CD8-positive, alpha-beta T cell (primary cell): ENCODE measurements at regions of chr2 and their contacts with region 1.

Region 1: DNA sequence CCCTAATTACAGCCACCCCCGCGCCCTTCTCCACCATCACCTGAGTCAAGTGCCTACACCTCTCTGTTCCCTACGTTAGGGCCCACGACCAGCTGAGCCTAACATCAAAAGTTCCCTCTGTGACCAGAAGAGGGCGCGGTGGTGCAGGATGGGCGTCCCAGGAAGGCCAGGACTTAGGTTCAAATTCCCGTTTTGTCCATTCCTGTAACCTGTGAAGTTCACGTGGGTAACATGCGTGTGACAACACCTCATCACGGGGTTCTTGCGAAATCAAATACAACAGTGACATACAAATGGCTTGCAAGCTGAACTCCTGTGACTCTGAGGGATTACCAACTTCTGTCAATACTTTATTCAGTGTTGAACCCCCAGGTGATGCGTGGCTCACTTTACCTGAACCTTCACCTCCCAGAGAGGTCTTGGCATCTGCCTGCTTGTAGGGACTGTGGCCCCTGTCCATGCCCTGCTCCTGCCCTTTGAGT is 207.9 kb downstream of the ARL4C start:
- DNase-seq: peak; percentile 52 to 87 (median 73)
- ATAC-seq: no peak
- H3K4me3 ChIP-seq: no peak overlapping the region
- H3K4me3 Mint-ChIP-seq: peak overlapping the region; percentile 9
- H3K27ac ChIP-seq: peak overlapping the region; percentile 94 to 99
- H3K27ac Mint-ChIP-seq: peak overlapping the region; percentile 98
- H3K4me1 ChIP-seq: peaks cover 56% of the 10 kb centered on the region
- H3K4me1 Mint-ChIP-seq: peaks cover 66% of the 10 kb centered on the region
- H3K27me3 ChIP-seq: no peaks in the 10 kb centered on the region
- H3K27me3 Mint-ChIP-seq: no peaks in the 10 kb centered on the region
- CTCF ChIP-seq: peak; percentile 77

Region 2: DNA sequence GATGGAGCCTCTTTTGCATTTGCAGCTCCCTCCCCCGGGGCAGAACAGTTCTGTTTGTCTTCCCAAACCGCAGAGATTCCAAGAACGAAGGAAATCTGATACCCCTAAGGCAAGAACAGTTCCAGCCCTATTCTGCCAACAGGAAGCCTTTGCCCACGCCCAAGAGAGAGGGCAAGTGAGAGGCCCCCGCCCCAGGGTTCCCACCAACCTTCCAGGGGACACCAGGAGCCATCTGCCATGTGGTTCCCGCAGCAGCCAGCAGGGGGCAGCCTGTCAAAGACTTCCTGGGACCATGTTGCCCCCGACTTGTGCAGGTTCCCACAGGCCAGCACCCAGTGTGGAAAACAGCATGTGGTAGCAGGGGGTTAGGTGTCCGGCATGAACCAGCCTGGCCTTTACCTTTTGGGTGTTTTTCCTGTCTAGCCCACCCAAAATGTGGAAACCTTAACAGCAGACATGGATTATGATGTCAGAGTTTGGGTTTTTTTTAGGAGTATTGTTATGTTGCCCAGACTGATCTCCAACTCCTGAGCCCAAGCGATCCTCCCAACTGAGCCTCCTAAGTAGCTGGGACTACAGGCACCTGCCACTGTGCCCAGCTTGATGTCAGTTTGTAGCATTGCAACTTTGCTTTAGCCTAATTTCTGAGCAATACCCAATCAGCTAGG is 1677.3 kb before region 1 on chr2:
- CTCF ChIA-PET with region 1: no interaction called
- POLR2A ChIA-PET with region 1: no interaction called
- intact Hi-C with region 1: loop called in 1 of 2 experiments (anchors 5 kb)
- DNase-seq: peak; percentile 34 to 79 (median 72)
- ATAC-seq: peak; percentile 89
- H3K4me3 ChIP-seq: no peak overlapping the region
- H3K4me3 Mint-ChIP-seq: no peak overlapping the region
- H3K27ac ChIP-seq: no peak overlapping the region
- H3K27ac Mint-ChIP-seq: no peak overlapping the region
- H3K4me1 ChIP-seq: no peaks in the 10 kb centered on the region
- H3K4me1 Mint-ChIP-seq: no peaks in the 10 kb centered on the region
- H3K27me3 ChIP-seq: no peaks in the 10 kb centered on the region
- H3K27me3 Mint-ChIP-seq: peaks cover 3% of the 10 kb centered on the region
- CTCF ChIP-seq: peak; percentile 79

Region 3: GRCh38 chr2:233603520-233603919 is 685.5 kb before region 1 on chr2:
- CTCF ChIA-PET with region 1: no interaction called
- POLR2A ChIA-PET with region 1: no interaction called
- intact Hi-C with region 1: no loop called
- DNase-seq: no peak
- ATAC-seq: no peak
- H3K4me3 ChIP-seq: no peak overlapping the region
- H3K4me3 Mint-ChIP-seq: no peak overlapping the region
- H3K27ac ChIP-seq: no peak overlapping the region
- H3K27ac Mint-ChIP-seq: no peak overlapping the region
- H3K4me1 ChIP-seq: no peaks in the 10 kb centered on the region
- H3K4me1 Mint-ChIP-seq: no peaks in the 10 kb centered on the region
- H3K27me3 ChIP-seq: peaks cover 0 to 2% of the 10 kb centered on the region in 2 experiments
- H3K27me3 Mint-ChIP-seq: peaks cover 27% of the 10 kb centered on the region
- CTCF ChIP-seq: no peak

Region 4: DNA sequence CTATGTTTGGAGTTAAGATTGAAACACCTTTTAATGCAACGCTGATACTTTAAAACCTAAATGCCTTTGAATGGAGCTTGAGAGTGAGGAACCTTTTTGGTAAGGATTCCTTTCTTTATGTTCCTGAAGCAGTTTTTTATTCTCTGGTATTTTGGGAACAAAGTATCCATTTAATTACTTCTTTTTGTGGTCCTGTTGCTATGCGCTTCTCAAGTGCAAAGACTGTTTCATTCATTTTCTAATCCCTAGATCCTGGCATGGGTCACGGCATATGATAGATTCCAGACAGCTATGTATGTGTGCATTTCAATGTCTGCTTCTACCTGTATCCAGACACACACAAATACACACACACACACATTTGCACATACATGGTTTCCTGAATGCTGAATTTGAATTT is 343.9 kb before region 1 on chr2:
- CTCF ChIA-PET with region 1: no interaction called
- POLR2A ChIA-PET with region 1: no interaction called
- intact Hi-C with region 1: no loop called
- DNase-seq: no peak
- ATAC-seq: no peak
- H3K4me3 ChIP-seq: no peak overlapping the region
- H3K4me3 Mint-ChIP-seq: no peak overlapping the region
- H3K27ac ChIP-seq: no peak overlapping the region
- H3K27ac Mint-ChIP-seq: no peak overlapping the region
- H3K4me1 ChIP-seq: no peaks in the 10 kb centered on the region
- H3K4me1 Mint-ChIP-seq: no peaks in the 10 kb centered on the region
- H3K27me3 ChIP-seq: peaks cover 0 to 2% of the 10 kb centered on the region in 2 experiments
- H3K27me3 Mint-ChIP-seq: peaks cover 39% of the 10 kb centered on the region
- CTCF ChIP-seq: no peak

Region 5: DNA sequence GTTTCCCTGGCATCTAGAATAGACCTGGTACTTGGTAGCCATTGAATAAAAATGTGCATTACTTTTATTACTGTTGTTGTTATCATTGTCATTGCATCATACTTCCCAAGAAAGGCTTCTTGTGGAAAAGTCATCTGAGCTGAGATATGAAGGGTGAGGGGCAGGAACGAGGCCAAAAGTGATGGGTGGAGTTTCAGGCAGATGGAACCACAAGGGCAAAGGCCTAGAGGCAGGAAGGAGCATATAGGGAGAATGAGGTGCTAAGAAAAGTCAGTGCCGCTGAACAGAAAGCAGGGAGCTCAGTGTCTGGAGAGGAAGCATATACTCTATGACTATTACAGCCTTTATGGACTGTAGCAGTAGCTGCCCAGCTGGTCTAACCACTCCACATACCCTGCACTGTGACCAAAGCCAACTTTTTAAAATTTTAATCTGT is 19.2 kb before region 1 on chr2:
- CTCF ChIA-PET with region 1: interaction called, 9 read pairs
- POLR2A ChIA-PET with region 1: no interaction called
- intact Hi-C with region 1: loop called in 1 of 2 experiments (anchors 1 kb)
- DNase-seq: no peak
- ATAC-seq: no peak
- H3K4me3 ChIP-seq: no peak overlapping the region
- H3K4me3 Mint-ChIP-seq: no peak overlapping the region
- H3K27ac ChIP-seq: no peak overlapping the region
- H3K27ac Mint-ChIP-seq: no peak overlapping the region
- H3K4me1 ChIP-seq: peaks cover 28% of the 10 kb centered on the region
- H3K4me1 Mint-ChIP-seq: peaks cover 42% of the 10 kb centered on the region
- H3K27me3 ChIP-seq: no peaks in the 10 kb centered on the region
- H3K27me3 Mint-ChIP-seq: no peaks in the 10 kb centered on the region
- CTCF ChIP-seq: no peak

Region 6: DNA sequence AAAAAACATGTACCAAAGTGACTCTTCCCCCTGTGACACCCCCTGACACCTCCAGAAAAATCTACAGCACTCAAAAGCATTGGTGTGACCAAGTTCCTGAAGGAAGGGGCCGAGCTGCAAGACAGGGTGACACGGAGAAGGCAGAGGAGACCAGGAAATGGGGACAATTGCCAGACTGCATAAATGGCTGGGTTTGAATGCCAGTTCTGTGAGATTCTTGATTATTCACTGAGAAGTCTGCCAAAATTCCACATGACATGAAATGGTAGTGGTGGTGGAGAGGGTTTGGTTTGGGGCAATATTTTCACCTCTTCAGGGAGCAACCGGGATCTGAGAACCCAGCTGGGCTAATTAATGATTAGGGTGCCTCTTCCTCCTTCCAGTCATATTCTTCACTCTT is 29.3 kb after region 1 on chr2:
- CTCF ChIA-PET with region 1: no interaction called
- POLR2A ChIA-PET with region 1: no interaction called
- intact Hi-C with region 1: no loop called
- DNase-seq: peak in 1 of 9 experiments; percentile 7
- ATAC-seq: no peak
- H3K4me3 ChIP-seq: no peak overlapping the region
- H3K4me3 Mint-ChIP-seq: no peak overlapping the region
- H3K27ac ChIP-seq: no peak overlapping the region
- H3K27ac Mint-ChIP-seq: no peak overlapping the region
- H3K4me1 ChIP-seq: peaks cover 13% of the 10 kb centered on the region
- H3K4me1 Mint-ChIP-seq: peaks cover 29% of the 10 kb centered on the region
- H3K27me3 ChIP-seq: no peaks in the 10 kb centered on the region
- H3K27me3 Mint-ChIP-seq: no peaks in the 10 kb centered on the region
- CTCF ChIP-seq: no peak

Region 7: GRCh38 chr2:234329202-234329960 is 40.4 kb after region 1 on chr2:
- CTCF ChIA-PET with region 1: no interaction called
- POLR2A ChIA-PET with region 1: no interaction called
- intact Hi-C with region 1: loop called in 1 of 2 experiments (anchors 5 kb)
- DNase-seq: no peak
- ATAC-seq: no peak
- H3K4me3 ChIP-seq: no peak overlapping the region
- H3K4me3 Mint-ChIP-seq: no peak overlapping the region
- H3K27ac ChIP-seq: no peak overlapping the region
- H3K27ac Mint-ChIP-seq: no peak overlapping the region
- H3K4me1 ChIP-seq: no peaks in the 10 kb centered on the region
- H3K4me1 Mint-ChIP-seq: peaks cover 16% of the 10 kb centered on the region
- H3K27me3 ChIP-seq: no peaks in the 10 kb centered on the region
- H3K27me3 Mint-ChIP-seq: no peaks in the 10 kb centered on the region
- CTCF ChIP-seq: no peak

Region 8: DNA sequence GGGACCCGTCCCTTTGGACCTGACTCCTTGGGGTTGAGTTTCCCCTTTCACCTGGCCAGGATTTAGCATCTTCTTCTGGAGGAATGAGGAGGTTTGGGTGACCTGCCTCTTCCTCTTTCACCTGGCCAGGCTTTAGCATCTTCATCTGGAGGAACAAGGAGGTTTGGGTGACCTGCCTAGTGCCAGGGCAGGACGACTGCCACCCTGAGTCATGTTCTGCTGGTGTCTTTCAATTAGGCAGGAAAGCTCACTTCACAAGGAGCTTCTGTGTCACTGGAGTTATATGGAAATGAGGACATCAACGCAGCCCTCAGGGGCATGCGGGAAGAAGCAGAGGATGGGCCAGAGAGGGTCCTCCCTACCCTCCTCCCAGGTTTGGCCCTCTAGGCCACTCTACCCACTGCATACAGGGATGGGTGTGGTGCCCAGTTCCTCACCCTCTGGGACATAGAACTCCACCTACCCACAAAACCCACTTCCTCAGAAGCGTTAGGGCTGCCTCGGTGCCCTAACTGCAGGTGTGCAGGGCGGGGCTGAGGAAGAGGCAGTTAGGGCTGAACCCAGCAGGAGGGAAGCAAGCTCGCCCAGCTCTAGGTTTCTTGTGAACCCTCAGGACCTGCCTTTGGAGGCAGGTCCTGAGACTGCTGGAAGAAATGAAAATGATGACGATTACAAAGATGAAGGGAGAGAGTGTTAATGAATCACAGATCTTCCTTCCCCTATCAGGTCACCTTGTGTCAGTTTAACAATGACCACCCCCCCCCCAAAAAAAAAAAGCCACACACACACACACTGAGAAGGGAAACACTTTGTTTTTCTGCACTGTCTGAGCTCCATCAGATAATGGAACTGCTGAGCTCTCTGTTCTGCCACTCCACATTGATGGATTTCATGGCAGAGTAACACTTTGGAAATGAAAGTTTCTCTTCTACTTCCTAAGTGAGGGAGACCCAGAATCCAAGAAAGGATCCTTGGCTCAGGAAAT is 136.9 kb after region 1 on chr2:
- CTCF ChIA-PET with region 1: interaction called, 13 read pairs
- POLR2A ChIA-PET with region 1: interaction called, 35 read pairs
- intact Hi-C with region 1: loop called (anchors 1 kb)
- DNase-seq: peak; percentile 61 to 94 (median 79)
- ATAC-seq: peak; percentile 72
- H3K4me3 ChIP-seq: peak overlapping the region in 1 of 2 experiments; percentile 31
- H3K4me3 Mint-ChIP-seq: peak overlapping the region; percentile 74
- H3K27ac ChIP-seq: peak overlapping the region; percentile 83 to 92
- H3K27ac Mint-ChIP-seq: peak overlapping the region; percentile 100
- H3K4me1 ChIP-seq: peaks cover 85% of the 10 kb centered on the region
- H3K4me1 Mint-ChIP-seq: peaks cover 91% of the 10 kb centered on the region
- H3K27me3 ChIP-seq: no peaks in the 10 kb centered on the region
- H3K27me3 Mint-ChIP-seq: no peaks in the 10 kb centered on the region
- CTCF ChIP-seq: no peak

Region 9: GRCh38 chr2:234483568-234484251 is 194.7 kb after region 1 on chr2:
- CTCF ChIA-PET with region 1: interaction called, 11 read pairs
- POLR2A ChIA-PET with region 1: interaction called, 13 read pairs
- intact Hi-C with region 1: loop called in 1 of 2 experiments (anchors 2 kb)
- DNase-seq: peak; percentile 70 to 97 (median 87)
- ATAC-seq: peak; percentile 76
- H3K4me3 ChIP-seq: peak overlapping the region; percentile 0 to 12
- H3K4me3 Mint-ChIP-seq: peak overlapping the region; percentile 64
- H3K27ac ChIP-seq: peak overlapping the region; percentile 78 to 89
- H3K27ac Mint-ChIP-seq: peak overlapping the region; percentile 98
- H3K4me1 ChIP-seq: peaks cover 62% of the 10 kb centered on the region
- H3K4me1 Mint-ChIP-seq: peaks cover 84% of the 10 kb centered on the region
- H3K27me3 ChIP-seq: no peaks in the 10 kb centered on the region
- H3K27me3 Mint-ChIP-seq: no peaks in the 10 kb centered on the region
- CTCF ChIP-seq: peak; percentile 70